ENCODE measurements at regions of chr12 and their contacts with region 1.

Region 1: GRCh38 chr12:85866986-85867776 is 6.9 kb upstream of the NTS start:
- H3K4me3 ChIP-seq: no peak overlapping the region
- H3K27ac ChIP-seq: no peak overlapping the region
- H3K4me1 ChIP-seq: no peaks in the 10 kb centered on the region
- CTCF ChIP-seq: peak; percentile 51; the same call in 1 of the 2 replicates

Region 2: GRCh38 chr12:85468356-85469157 is 398.6 kb before region 1 on chr12:
- CTCF ChIA-PET with region 1: interaction called, 34 read pairs
- POLR2A ChIA-PET with region 1: no interaction called
- H3K4me3 ChIP-seq: peak overlapping the region; percentile 20
- H3K27ac ChIP-seq: no peak overlapping the region
- H3K4me1 ChIP-seq: 0 out of 2 replicates have a peak, but pooled peaks cover 2% of the 10 kb centered on the region
- CTCF ChIP-seq: peak; percentile 67; the same call in 1 of the 2 replicates

Region 3: GRCh38 chr12:85575120-85576096 is 291.8 kb before region 1 on chr12:
- CTCF ChIA-PET with region 1: interaction called, 70 read pairs
- POLR2A ChIA-PET with region 1: no interaction called
- H3K4me3 ChIP-seq: no peak overlapping the region
- H3K27ac ChIP-seq: no peak overlapping the region
- H3K4me1 ChIP-seq: no peaks in the 10 kb centered on the region
- CTCF ChIP-seq: peak; percentile 54; the same call in 1 of the 2 replicates

Region 4: GRCh38 chr12:85733221-85733840 is 133.8 kb before region 1 on chr12:
- CTCF ChIA-PET with region 1: interaction called, 10 read pairs
- POLR2A ChIA-PET with region 1: no interaction called
- H3K4me3 ChIP-seq: no peak overlapping the region
- H3K27ac ChIP-seq: no peak overlapping the region
- H3K4me1 ChIP-seq: no peaks in the 10 kb centered on the region
- CTCF ChIP-seq: no peak

Region 5: DNA sequence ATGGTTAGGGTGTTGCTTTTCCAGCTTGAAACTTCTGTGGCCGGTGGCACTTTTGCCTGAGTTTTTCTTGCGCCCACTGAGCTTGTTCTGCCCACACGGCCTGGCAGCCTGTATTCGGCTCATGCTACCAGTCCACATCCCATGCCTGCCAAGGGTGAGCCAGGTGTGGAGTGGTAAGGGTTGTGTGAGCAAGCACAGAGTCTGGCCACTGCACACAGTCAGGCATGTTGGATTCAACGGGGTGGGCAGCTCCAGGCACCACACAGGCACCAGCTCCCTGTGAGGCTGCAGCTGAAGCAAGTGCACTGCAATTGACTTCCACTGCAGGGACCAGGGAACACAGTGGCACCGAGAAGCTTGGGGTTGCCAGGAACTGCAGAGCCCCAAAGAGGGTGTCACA is 11.9 kb before region 1 on chr12:
- CTCF ChIA-PET with region 1: interaction called, 23 read pairs
- POLR2A ChIA-PET with region 1: no interaction called
- H3K4me3 ChIP-seq: no peak overlapping the region
- H3K27ac ChIP-seq: no peak overlapping the region
- H3K4me1 ChIP-seq: no peaks in the 10 kb centered on the region
- CTCF ChIP-seq: no peak

Region 6: GRCh38 chr12:85877459-85877858 is 10.3 kb after region 1 on chr12:
- CTCF ChIA-PET with region 1: no interaction called
- POLR2A ChIA-PET with region 1: no interaction called
- H3K4me3 ChIP-seq: no peak overlapping the region
- H3K27ac ChIP-seq: no peak overlapping the region
- H3K4me1 ChIP-seq: no peaks in the 10 kb centered on the region
- CTCF ChIP-seq: no peak

Measured in HEK293 (cell line).